ENCODE measurements at regions of chr15 and their contacts with region 1.

Region 1: GRCh38 chr15:63610200-63610841 is 13.1 kb downstream of the FBXL22 start:
- DNase-seq: peak; percentile 86
- H3K4me3 Mint-ChIP-seq: no peak overlapping the region
- H3K27ac Mint-ChIP-seq: peak overlapping the region; percentile 86
- H3K4me1 Mint-ChIP-seq: peaks cover 49% of the 10 kb centered on the region
- H3K27me3 Mint-ChIP-seq: no peaks in the 10 kb centered on the region

Region 2: DNA sequence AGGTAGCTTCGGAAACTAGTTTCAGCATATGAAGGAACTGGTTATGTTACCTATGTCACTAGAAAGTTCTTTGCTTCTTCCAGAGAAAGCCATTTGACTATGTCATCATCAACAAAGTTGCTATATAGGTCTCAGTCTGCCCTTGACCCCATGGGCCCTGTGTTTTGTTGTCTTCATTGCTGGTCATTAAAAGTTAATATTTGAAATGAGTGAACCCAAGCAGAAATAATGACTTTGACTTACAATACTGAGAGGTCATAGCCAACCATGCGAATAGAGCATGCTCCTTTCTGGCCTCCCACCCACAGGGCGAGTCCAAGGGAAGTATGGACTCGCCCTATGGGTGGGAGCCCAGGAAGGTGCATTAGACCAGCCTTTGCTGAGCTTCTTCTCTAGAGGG is 292.0 kb before region 1 on chr15:
- CTCF ChIA-PET with region 1: no interaction called
- POLR2A ChIA-PET with region 1: no interaction called
- DNase-seq: no peak
- H3K4me3 Mint-ChIP-seq: no peak overlapping the region
- H3K27ac Mint-ChIP-seq: no peak overlapping the region
- H3K4me1 Mint-ChIP-seq: no peaks in the 10 kb centered on the region
- H3K27me3 Mint-ChIP-seq: no peaks in the 10 kb centered on the region

Region 3: DNA sequence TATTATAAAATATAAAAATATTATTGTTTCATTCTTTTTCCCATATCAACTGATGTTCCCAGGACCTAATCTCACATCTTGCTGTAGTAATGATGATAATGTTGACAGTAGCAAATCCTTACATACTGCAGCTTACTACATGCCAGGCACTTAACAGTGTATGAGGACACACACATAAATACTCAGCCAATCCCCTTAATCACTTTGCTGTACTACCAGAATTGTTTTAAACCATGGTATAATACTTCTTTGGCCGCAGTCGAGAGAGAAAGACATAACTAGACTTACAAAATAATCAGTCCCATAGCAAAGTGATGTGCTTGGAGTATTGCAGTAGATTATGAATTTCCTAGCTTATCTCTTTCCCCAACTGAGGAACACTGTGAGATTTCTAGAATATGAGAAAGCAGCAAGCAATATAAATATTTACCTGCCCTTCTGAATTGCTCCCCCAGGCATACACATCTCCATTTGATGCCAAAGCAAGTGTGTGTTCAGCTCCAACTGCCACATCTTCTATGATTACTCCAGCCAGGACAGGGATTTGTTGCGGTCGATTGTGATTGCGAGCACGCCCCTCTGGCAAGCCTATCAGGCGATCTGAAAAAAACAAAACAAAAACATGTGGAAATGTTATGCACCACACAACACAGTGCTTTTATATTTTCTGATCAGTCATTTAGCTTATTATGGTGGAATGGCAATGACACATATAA is 19.9 kb after region 1 on chr15:
- CTCF ChIA-PET with region 1: interaction called, 14 read pairs
- POLR2A ChIA-PET with region 1: no interaction called
- DNase-seq: no peak
- H3K4me3 Mint-ChIP-seq: no peak overlapping the region
- H3K27ac Mint-ChIP-seq: no peak overlapping the region
- H3K4me1 Mint-ChIP-seq: no peaks in the 10 kb centered on the region
- H3K27me3 Mint-ChIP-seq: no peaks in the 10 kb centered on the region

Region 4: GRCh38 chr15:63891079-63891767 is 280.9 kb after region 1 on chr15:
- CTCF ChIA-PET with region 1: interaction called, 10 read pairs
- POLR2A ChIA-PET with region 1: interaction called, 3 read pairs
- DNase-seq: peak; percentile 77
- H3K4me3 Mint-ChIP-seq: no peak overlapping the region
- H3K27ac Mint-ChIP-seq: peak overlapping the region; percentile 28
- H3K4me1 Mint-ChIP-seq: peaks cover 46% of the 10 kb centered on the region
- H3K27me3 Mint-ChIP-seq: no peaks in the 10 kb centered on the region

Region 5: DNA sequence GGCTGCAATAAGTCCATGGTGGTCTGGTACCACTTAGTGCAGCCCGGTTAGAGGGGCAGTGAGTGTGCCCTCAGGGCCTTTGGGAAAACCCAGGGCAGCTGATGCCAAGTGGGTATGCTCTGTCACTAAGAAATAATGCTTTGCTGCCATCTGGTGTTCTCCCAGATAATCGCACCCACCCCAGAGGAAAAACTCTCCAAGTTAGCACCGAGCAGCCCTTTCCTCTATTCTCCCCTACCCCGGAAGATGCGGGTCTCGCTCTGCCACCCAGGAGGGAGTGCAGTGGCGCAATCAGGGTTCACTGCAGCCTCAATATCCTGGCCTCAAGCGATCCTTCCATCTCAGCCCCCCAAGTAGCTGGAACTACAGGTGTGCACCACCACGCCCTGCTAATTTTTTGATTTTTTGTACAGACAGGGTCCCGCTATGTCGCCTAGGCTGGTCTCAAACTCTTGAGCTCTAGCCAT is 457.3 kb after region 1 on chr15:
- CTCF ChIA-PET with region 1: interaction called, 48 read pairs
- POLR2A ChIA-PET with region 1: interaction called, 6 read pairs
- DNase-seq: peak; percentile 70
- H3K4me3 Mint-ChIP-seq: no peak overlapping the region
- H3K27ac Mint-ChIP-seq: peak overlapping the region; percentile 49
- H3K4me1 Mint-ChIP-seq: peaks cover 16% of the 10 kb centered on the region
- H3K27me3 Mint-ChIP-seq: no peaks in the 10 kb centered on the region

Measured in activated CD4-positive, alpha-beta memory T cell treated with anti-CD3 and anti-CD28 coated beads, Interleukin-2, amount 10 ng/mL, durations not matched to agents 7 days and 5 days (primary cell).